ENCODE measurements at regions of chr11 and their contacts with region 1.

Region 1: DNA sequence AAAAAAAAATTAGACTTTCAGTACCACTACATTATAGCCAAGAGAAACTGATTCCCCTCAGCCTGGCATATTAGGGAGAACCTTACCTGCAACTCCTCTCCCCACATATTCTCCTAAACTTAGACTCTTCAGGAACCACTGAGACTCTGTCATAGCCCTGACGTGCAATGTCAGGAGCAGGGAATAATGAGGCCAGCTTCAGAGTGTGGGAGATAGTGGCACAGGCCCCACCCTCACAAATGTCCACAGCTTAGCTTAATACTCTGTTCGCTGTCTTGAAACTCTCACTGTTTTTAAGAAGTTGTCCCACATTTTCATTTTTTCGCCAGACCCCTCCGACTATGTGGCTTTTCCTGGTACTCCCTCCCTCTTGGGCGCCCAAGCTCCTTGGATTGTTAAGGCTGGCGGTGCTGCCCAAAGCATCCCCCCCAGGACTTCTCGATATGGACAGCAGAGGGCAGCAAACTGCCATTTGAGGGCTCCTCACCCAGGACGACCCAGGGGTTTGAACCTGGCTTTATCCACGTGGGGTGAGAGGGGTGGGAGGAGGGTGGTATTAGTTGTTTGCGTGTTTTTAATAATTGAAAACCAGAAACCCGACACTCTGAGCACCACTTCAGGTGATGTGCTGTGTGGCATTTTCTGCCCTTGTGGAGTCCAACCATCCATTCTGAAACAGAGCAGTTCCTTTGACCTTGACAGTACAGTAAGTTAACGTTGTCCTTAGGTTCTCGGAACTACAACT is 45.2 kb upstream of the RASSF10 start:
- DNase-seq: peak; percentile 88
- ATAC-seq: peak; percentile 98
- H3K4me3 Mint-ChIP-seq: no peak overlapping the region
- H3K27ac Mint-ChIP-seq: no peak overlapping the region
- H3K4me1 Mint-ChIP-seq: peaks cover 11% of the 10 kb centered on the region; the same call in 1 of the 2 replicates
- H3K27me3 Mint-ChIP-seq: peaks cover 8% of the 10 kb centered on the region
- CTCF ChIP-seq: peak; percentile 78

Region 2: DNA sequence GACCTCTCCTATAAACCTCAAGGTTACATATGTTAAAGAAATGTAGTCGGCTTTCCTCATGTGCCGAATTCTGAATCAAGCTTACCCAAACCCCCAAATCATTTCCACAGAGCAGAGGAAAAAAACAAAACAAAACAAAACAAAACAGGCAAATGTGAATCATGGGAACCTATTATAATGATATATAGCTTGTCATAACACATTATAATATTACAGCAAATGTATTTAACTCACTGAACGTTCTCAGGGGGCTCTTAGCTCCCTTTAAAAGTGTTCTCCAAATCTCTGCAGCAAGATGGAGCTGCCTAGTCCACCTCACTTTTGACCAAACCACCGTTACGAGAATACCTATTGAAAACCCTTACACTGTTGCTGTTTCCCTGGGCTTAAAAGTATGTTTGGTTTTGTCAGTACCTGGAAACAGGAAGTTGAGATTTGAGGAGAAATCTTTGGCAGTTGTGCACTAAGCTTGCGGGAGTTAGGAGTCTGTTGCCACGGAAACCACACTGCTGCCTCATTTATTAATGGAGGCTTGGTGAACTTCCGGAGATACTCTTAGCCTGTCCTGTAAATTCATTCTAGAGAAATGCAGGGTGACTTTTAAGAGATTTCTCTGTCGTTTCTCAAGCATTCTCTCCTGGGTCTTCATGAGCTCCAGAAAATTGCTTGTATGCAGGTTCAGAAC is 121.9 kb before region 1 on chr11:
- CTCF ChIA-PET with region 1: no interaction called
- POLR2A ChIA-PET with region 1: no interaction called
- DNase-seq: no peak
- ATAC-seq: no peak; the same call in 1 of the 2 replicates
- H3K4me3 Mint-ChIP-seq: no peak overlapping the region
- H3K27ac Mint-ChIP-seq: peak overlapping the region; percentile 73
- H3K4me1 Mint-ChIP-seq: peaks cover 72% of the 10 kb centered on the region
- H3K27me3 Mint-ChIP-seq: no peaks in the 10 kb centered on the region
- CTCF ChIP-seq: no peak

Region 3: DNA sequence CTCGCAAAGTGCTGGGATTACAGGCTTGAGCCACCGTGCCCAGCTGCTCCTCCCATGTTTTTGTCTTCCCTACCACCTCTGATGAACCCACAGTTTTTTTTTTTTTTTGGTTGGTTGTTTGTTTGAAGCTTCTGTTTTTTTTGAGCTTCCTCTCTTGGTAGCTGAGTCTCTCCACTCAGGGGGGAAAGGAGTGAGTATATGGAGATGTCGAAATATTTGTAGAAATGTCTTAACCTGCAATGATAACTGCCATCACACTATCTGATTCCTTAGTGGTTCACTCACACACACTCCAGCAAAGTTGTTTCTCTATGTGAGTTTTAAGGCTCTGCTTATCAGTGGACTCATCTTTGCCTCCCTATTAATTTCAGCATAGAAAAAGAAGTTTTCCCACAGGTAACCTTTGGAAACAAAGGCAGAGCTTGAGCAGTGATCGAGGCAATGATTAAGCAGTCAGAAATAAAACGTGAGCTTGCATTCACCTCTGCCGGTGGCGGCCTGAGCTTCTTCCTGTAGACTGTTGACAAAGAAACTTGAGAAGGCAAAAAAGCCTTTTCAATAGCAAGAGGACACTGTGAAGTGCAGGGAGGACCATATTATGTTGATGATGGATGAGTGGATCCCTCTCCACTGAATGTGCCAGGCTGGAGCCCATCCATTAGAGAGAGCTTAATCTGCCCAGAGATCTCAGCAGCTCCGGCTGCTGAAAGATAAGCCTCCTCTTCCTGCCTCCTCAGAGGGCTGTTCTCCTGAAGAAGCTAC is 16.1 kb after region 1 on chr11:
- CTCF ChIA-PET with region 1: interaction called, 27 read pairs
- POLR2A ChIA-PET with region 1: no interaction called
- DNase-seq: no peak
- ATAC-seq: no peak; the same call in 1 of the 2 replicates
- H3K4me3 Mint-ChIP-seq: no peak overlapping the region
- H3K27ac Mint-ChIP-seq: no peak overlapping the region
- H3K4me1 Mint-ChIP-seq: peaks cover 9% of the 10 kb centered on the region
- H3K27me3 Mint-ChIP-seq: no peaks in the 10 kb centered on the region
- CTCF ChIP-seq: no peak

Region 4: GRCh38 chr11:13114566-13115379 is 150.8 kb after region 1 on chr11:
- CTCF ChIA-PET with region 1: interaction called, 14 read pairs
- POLR2A ChIA-PET with region 1: no interaction called
- DNase-seq: peak; percentile 66
- ATAC-seq: peak; percentile 98
- H3K4me3 Mint-ChIP-seq: no peak overlapping the region
- H3K27ac Mint-ChIP-seq: peak overlapping the region; percentile 44; the same call in 1 of the 2 replicates
- H3K4me1 Mint-ChIP-seq: peaks cover 24% of the 10 kb centered on the region
- H3K27me3 Mint-ChIP-seq: peaks cover 5% of the 10 kb centered on the region
- CTCF ChIP-seq: no peak

Region 5: GRCh38 chr11:13145461-13145860 is 181.5 kb after region 1 on chr11:
- CTCF ChIA-PET with region 1: interaction called, 42 read pairs
- POLR2A ChIA-PET with region 1: no interaction called
- DNase-seq: no peak
- ATAC-seq: peak; percentile 75
- H3K4me3 Mint-ChIP-seq: no peak overlapping the region
- H3K27ac Mint-ChIP-seq: no peak overlapping the region
- H3K4me1 Mint-ChIP-seq: 0 out of 2 replicates have a peak, but pooled peaks cover 3% of the 10 kb centered on the region
- H3K27me3 Mint-ChIP-seq: no peaks in the 10 kb centered on the region
- CTCF ChIP-seq: no peak

Region 6: GRCh38 chr11:13210424-13210823 is 246.5 kb after region 1 on chr11:
- CTCF ChIA-PET with region 1: interaction called, 30 read pairs
- POLR2A ChIA-PET with region 1: no interaction called
- DNase-seq: peak; percentile 62
- ATAC-seq: peak; percentile 76
- H3K4me3 Mint-ChIP-seq: no peak overlapping the region
- H3K27ac Mint-ChIP-seq: no peak overlapping the region
- H3K4me1 Mint-ChIP-seq: peaks cover 32% of the 10 kb centered on the region
- H3K27me3 Mint-ChIP-seq: no peaks in the 10 kb centered on the region
- CTCF ChIP-seq: peak; percentile 38; the same call in 1 of the 2 replicates